CD4-positive, alpha-beta T cell (primary cell): ENCODE measurements at regions of chr12 and their contacts with region 1.

Region 1: GRCh38 chr12:123972457-123973401 is at the starts of genes CCDC92 and ZNF664:
- DNase-seq: peak; percentile 89 to 98 (median 96)
- ATAC-seq: peak; percentile 74
- H3K4me3 ChIP-seq: peak within 1 kb of the TSS; percentile 58
- H3K4me3 Mint-ChIP-seq: peak within 1 kb of the TSS; percentile 97
- H3K27ac ChIP-seq: peak within 1 kb of the TSS in 1 of 2 donors; percentile 38
- H3K27ac Mint-ChIP-seq: peak within 1 kb of the TSS; percentile 91
- H3K4me1 ChIP-seq: peaks cover 13% of the 10 kb centered on the region
- H3K4me1 Mint-ChIP-seq: peaks cover 48% of the 10 kb centered on the region
- H3K27me3 ChIP-seq: no peaks in the 10 kb centered on the region
- H3K27me3 Mint-ChIP-seq: no peaks in the 10 kb centered on the region
- CTCF ChIP-seq: no peak
- total RNA-seq, gene CCDC92: 11.5 to 12.7 TPM
- total RNA-seq, gene ZNF664: 13.4 to 19.0 TPM

Region 2: DNA sequence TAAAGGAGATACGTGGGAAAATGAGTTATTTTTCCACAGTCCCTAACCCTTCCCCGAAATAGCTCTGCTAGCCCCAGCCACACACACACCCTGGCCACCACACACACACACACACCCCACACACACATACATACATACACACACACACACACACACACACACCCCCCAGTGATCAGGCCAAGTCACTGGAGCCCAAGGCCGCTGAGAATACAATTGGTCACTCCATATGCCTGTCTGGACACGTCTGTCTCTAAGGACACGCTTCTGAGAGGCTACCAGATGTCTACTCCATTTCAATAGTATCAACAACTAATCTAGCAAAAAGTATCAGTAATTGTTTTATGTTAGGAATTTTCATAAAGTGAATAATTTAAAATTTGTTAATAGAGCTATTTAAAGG is 1733.9 kb before region 1 on chr12:
- CTCF ChIA-PET with region 1: no interaction called
- POLR2A ChIA-PET with region 1: no interaction called
- intact Hi-C with region 1: loop called in 1 of 2 experiments (anchors 10 kb)
- DNase-seq: no peak
- ATAC-seq: no peak
- H3K4me3 ChIP-seq: no peak overlapping the region
- H3K4me3 Mint-ChIP-seq: no peak overlapping the region
- H3K27ac ChIP-seq: no peak overlapping the region
- H3K27ac Mint-ChIP-seq: no peak overlapping the region
- H3K4me1 ChIP-seq: peaks cover 22% of the 10 kb centered on the region
- H3K4me1 Mint-ChIP-seq: peaks cover 14% of the 10 kb centered on the region
- H3K27me3 ChIP-seq: no peaks in the 10 kb centered on the region
- H3K27me3 Mint-ChIP-seq: no peaks in the 10 kb centered on the region
- CTCF ChIP-seq: no peak

Region 3: DNA sequence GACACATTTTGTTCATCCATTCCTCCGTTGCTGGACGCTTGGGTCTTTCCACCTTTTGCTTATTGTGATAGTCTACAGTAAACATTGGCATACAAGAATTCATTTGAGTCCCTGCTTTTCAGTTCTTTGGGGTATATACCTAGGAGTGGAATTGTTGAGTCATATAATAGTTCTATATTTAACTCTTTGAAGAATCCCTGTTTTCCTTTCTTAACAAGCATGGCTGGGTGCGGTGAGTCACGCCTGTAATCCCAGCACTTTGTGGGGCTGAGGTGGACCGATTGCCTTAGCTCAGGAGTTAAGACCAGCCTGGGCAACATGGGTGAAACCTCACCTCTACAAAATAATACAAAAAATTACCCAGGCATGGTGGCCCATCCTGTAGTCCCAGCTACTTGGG is 75.5 kb before region 1 on chr12:
- CTCF ChIA-PET with region 1: no interaction called
- POLR2A ChIA-PET with region 1: no interaction called
- intact Hi-C with region 1: no loop called
- DNase-seq: no peak
- ATAC-seq: no peak
- H3K4me3 ChIP-seq: no peak overlapping the region
- H3K4me3 Mint-ChIP-seq: no peak overlapping the region
- H3K27ac ChIP-seq: no peak overlapping the region
- H3K27ac Mint-ChIP-seq: no peak overlapping the region
- H3K4me1 ChIP-seq: peaks cover 4% of the 10 kb centered on the region
- H3K4me1 Mint-ChIP-seq: peaks cover 4% of the 10 kb centered on the region
- H3K27me3 ChIP-seq: no peaks in the 10 kb centered on the region
- H3K27me3 Mint-ChIP-seq: no peaks in the 10 kb centered on the region
- CTCF ChIP-seq: no peak

Region 4: DNA sequence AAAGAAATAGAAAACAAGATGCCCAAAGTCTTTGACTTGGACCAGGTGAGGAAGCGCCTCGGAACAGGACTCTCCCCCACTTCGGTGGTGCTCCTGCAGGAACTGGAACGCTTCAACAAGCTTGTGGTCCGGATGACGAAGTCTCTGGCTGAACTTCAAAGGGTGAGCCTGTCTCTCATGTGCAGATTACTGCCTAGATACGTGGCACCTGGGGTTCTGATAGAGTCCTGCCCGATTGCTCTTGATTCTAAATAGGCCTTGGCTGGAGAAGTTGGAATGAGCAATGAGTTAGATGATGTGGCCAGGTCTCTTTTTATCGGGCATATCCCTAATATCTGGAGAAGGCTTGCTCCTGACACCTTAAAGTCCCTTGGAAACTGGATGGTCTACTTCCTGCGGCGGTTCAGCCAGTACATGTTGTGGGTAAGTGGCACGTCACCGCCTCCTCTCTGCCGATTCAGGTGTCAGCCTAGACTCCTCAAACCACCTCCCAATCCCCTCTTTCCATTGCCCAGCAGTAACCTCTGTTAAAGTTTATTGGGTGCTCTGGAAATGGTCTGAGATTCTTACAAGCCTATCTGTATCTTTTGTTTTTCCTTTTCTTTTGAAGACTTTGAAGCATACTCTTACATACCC is 40.9 kb before region 1 on chr12:
- CTCF ChIA-PET with region 1: no interaction called
- POLR2A ChIA-PET with region 1: interaction called, 7 read pairs
- intact Hi-C with region 1: loop called (anchors 2 to 5 kb)
- DNase-seq: peak in 13 of 14 experiments; percentile 21 to 84 (median 42)
- ATAC-seq: peak; percentile 88
- H3K4me3 ChIP-seq: peak overlapping the region; percentile 33
- H3K4me3 Mint-ChIP-seq: peak overlapping the region; percentile 62
- H3K27ac ChIP-seq: no peak overlapping the region
- H3K27ac Mint-ChIP-seq: peak overlapping the region; percentile 16
- H3K4me1 ChIP-seq: peaks cover 20% of the 10 kb centered on the region
- H3K4me1 Mint-ChIP-seq: peaks cover 24% of the 10 kb centered on the region
- H3K27me3 ChIP-seq: no peaks in the 10 kb centered on the region
- H3K27me3 Mint-ChIP-seq: no peaks in the 10 kb centered on the region
- CTCF ChIP-seq: no peak

Region 5: GRCh38 chr12:123950476-123951349 is 22.0 kb before region 1 on chr12:
- CTCF ChIA-PET with region 1: no interaction called
- POLR2A ChIA-PET with region 1: interaction called, 3 read pairs
- intact Hi-C with region 1: loop called in 1 of 2 experiments (anchors 2 kb)
- DNase-seq: no peak
- ATAC-seq: no peak
- H3K4me3 ChIP-seq: no peak overlapping the region
- H3K4me3 Mint-ChIP-seq: no peak overlapping the region
- H3K27ac ChIP-seq: no peak overlapping the region
- H3K27ac Mint-ChIP-seq: no peak overlapping the region
- H3K4me1 ChIP-seq: no peaks in the 10 kb centered on the region
- H3K4me1 Mint-ChIP-seq: no peaks in the 10 kb centered on the region
- H3K27me3 ChIP-seq: no peaks in the 10 kb centered on the region
- H3K27me3 Mint-ChIP-seq: no peaks in the 10 kb centered on the region
- CTCF ChIP-seq: no peak

Region 6: DNA sequence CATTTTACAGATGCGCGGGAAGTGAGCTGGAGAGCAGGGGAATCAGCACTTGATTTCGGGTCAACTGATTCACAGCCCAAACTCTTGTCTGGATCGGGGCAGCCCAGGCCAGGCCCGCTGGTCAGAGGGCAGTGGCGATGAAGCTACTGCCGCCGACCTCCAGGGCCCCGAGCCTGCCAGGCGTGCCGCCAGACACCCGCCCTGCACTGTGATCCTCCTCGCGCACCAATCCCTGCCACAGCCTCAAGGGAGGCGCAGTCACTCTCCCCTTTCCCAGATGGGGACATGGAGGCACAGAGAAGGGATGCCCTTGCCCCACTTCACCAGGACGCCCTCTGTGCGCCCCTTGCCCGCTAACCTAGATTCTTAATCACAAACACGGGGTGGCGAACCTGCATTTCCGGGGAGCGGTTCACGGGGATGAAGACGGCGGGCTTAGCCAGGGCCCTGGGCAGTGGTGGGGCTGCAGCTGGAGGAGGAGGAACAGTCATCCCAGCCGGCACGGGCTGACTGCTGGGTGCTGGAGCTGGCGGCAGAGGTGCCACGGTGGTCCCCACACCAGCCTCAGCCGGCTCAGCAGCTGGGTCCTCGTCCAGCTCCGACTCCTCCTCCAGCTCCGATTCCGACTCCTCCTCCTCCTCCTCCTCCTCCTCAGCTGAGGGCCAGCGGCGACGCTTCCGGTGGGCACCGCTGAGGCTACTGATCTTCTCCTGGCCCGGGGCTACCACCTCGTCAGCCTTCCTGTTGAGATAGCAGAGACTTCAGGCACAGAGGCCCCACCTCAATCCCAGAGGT is 1007.6 kb after region 1 on chr12:
- CTCF ChIA-PET with region 1: no interaction called
- POLR2A ChIA-PET with region 1: no interaction called
- intact Hi-C with region 1: loop called in 1 of 2 experiments (anchors 10 kb)
- DNase-seq: no peak
- ATAC-seq: no peak
- H3K4me3 ChIP-seq: no peak overlapping the region
- H3K4me3 Mint-ChIP-seq: no peak overlapping the region
- H3K27ac ChIP-seq: no peak overlapping the region
- H3K27ac Mint-ChIP-seq: no peak overlapping the region
- H3K4me1 ChIP-seq: no peaks in the 10 kb centered on the region
- H3K4me1 Mint-ChIP-seq: no peaks in the 10 kb centered on the region
- H3K27me3 ChIP-seq: no peaks in the 10 kb centered on the region
- H3K27me3 Mint-ChIP-seq: no peaks in the 10 kb centered on the region
- CTCF ChIP-seq: no peak